SK-N-SH (cell line): ENCODE measurements at regions of chr6 and their contacts with region 1.

Region 1: GRCh38 chr6:102619585-102619984 is 1226.1 kb downstream of the GRIK2 start:
- DNase-seq: peak; percentile 10
- H3K4me3 ChIP-seq: no peak overlapping the region
- H3K27ac ChIP-seq: no peak overlapping the region
- H3K4me1 ChIP-seq: no peaks in the 10 kb centered on the region
- H3K27me3 ChIP-seq: no peaks in the 10 kb centered on the region
- CTCF ChIP-seq: peak; percentile 72
- EP300 ChIP-seq: no peak
- RAD21 ChIP-seq: peak; percentile 69

Region 2: GRCh38 chr6:101393251-101393828 is 1226.2 kb before region 1 on chr6 and contains the start of gene GRIK2:
- CTCF ChIA-PET with region 1: interaction called, 10 read pairs
- POLR2A ChIA-PET with region 1: no interaction called
- DNase-seq: peak; percentile 81
- H3K4me3 ChIP-seq: peak within 1 kb of the TSS; percentile 53 to 57
- H3K27ac ChIP-seq: no peak within 1 kb of the TSS; a peak in 1 of 4 replicates
- H3K4me1 ChIP-seq: peaks cover 0 to 9% of the 10 kb centered on the region in 2 experiments; a peak in 2 of 4 replicates
- H3K27me3 ChIP-seq: peaks cover 25% of the 10 kb centered on the region
- CTCF ChIP-seq: peak; percentile 45; the same call in 1 of the 2 replicates
- EP300 ChIP-seq: no peak
- RAD21 ChIP-seq: peak; percentile 45
- polyA plus RNA-seq, gene GRIK2: 0.26 and 0.30 TPM in 2 replicates